ENCODE measurements at regions of chr1 and their contacts with region 1.

Region 1: GRCh38 chr1:201999625-202000238 is 10.7 kb upstream of the ELF3 start:
- DNase-seq: no peak
- H3K4me3 ChIP-seq: no peak overlapping the region
- H3K27ac ChIP-seq: no peak overlapping the region
- H3K4me1 ChIP-seq: no peaks in the 10 kb centered on the region
- H3K27me3 ChIP-seq: no peaks in the 10 kb centered on the region
- CTCF ChIP-seq: peak; percentile 49 to 93 (median 91)
- EP300 ChIP-seq: no peak
- POLR2A ChIP-seq: peak in 1 of 2 experiments; percentile 60; a peak in 2 of 3 replicates
- RAD21 ChIP-seq: peak; percentile 79 to 83

Region 2: DNA sequence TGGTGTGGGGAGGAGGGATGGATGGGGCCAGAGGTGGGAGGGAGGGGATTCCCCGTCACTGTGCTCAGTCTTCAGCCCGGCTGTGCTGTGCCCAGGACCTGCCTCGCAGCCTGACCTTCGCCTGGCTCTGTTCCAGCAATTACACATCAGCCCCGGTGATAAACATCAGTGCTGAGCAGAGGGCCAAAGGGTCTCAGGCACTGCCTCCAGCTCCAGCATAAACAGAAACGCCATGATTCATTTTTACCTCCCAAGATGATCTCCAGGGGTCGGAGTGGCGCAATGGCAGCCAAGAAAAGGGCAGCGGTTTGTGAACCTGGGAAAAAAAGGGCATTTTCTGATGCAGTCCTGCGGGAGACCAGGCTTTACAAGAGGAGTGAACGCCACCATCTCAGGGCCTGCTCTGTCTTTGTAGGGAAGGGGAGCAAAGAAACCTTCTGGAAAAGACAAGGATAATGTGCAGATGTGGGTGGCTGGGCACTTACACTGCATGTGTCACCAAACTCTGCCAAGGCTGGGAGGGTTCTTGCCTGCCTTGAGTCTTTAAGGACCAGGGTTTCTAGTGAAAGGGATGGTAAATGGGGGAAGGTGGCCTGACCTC is 83.0 kb before region 1 on chr1:
- CTCF ChIA-PET with region 1: interaction called, 10 read pairs
- POLR2A ChIA-PET with region 1: no interaction called
- DNase-seq: no peak
- H3K4me3 ChIP-seq: no peak overlapping the region
- H3K27ac ChIP-seq: no peak overlapping the region
- H3K4me1 ChIP-seq: peaks cover 0 to 3% (median 1%) of the 10 kb centered on the region in 4 experiments; a peak in 5 of 7 replicates
- H3K27me3 ChIP-seq: no peaks in the 10 kb centered on the region
- CTCF ChIP-seq: no peak
- EP300 ChIP-seq: no peak
- POLR2A ChIP-seq: no peak
- RAD21 ChIP-seq: no peak

Region 3: DNA sequence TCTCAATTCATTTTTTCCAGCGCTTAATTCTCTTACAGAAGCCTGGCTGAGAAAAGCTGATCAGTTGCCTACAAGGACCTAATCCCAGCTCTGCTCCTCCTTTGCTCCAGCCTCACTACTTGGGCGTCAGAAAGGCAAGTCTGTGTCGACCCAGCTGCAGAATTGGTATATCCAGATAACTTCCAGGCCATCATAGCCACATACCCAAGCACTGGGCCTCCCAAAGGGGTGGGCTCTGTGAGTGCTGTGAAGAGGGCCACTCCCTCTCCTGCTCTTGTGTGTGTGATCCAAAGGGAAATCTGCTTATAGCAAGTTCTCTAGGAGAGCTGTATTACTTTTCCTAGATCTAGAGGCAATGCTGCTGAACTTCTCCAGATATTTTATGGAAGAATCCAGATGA is 71.5 kb before region 1 on chr1:
- CTCF ChIA-PET with region 1: no interaction called
- POLR2A ChIA-PET with region 1: no interaction called
- DNase-seq: no peak
- H3K4me3 ChIP-seq: no peak overlapping the region
- H3K27ac ChIP-seq: no peak overlapping the region
- H3K4me1 ChIP-seq: no peaks in the 10 kb centered on the region
- H3K27me3 ChIP-seq: no peaks in the 10 kb centered on the region
- CTCF ChIP-seq: no peak
- EP300 ChIP-seq: no peak
- POLR2A ChIP-seq: no peak
- RAD21 ChIP-seq: no peak

Region 4: DNA sequence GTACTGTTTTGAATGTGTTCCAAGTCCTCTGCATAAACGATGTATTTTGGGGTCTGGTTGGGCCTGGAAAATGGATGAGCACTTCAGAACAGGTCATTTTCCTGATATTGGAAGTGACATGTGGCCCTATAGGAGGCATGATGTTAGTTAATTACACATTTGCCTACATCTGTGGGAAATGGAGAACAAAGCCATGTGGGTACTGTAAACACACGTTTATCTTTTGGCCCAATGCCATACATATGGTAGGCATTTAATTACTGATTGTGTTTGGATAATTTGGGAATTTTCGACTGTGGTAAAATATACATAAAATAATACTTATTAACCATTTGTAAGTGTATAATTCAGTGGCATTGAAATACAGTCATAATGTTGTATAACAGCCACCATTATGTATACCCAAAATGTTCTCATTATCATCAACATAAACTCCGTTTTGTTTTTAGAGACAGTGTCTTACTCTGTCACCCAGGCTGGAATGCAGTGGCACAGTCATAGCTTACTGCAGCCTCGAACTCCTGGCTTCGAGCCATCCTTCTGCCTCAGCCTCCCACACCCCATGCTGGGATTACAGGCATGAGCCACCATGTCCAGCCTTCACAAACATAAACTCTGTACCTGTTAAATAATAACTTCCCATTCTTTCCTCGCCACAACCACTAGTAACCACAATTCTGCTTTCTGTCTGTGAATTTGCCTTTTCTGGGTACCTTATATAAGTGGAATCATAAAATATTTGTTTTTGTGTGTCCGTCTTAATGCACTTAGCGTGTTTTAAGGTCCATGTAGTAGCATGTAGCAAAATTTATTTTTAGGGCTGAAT is 29.2 kb before region 1 on chr1:
- CTCF ChIA-PET with region 1: interaction called, 24 read pairs
- POLR2A ChIA-PET with region 1: no interaction called
- DNase-seq: no peak
- H3K4me3 ChIP-seq: no peak overlapping the region
- H3K27ac ChIP-seq: no peak overlapping the region
- H3K4me1 ChIP-seq: no peaks in the 10 kb centered on the region
- H3K27me3 ChIP-seq: no peaks in the 10 kb centered on the region
- CTCF ChIP-seq: no peak
- EP300 ChIP-seq: no peak
- POLR2A ChIP-seq: no peak
- RAD21 ChIP-seq: no peak

Region 5: DNA sequence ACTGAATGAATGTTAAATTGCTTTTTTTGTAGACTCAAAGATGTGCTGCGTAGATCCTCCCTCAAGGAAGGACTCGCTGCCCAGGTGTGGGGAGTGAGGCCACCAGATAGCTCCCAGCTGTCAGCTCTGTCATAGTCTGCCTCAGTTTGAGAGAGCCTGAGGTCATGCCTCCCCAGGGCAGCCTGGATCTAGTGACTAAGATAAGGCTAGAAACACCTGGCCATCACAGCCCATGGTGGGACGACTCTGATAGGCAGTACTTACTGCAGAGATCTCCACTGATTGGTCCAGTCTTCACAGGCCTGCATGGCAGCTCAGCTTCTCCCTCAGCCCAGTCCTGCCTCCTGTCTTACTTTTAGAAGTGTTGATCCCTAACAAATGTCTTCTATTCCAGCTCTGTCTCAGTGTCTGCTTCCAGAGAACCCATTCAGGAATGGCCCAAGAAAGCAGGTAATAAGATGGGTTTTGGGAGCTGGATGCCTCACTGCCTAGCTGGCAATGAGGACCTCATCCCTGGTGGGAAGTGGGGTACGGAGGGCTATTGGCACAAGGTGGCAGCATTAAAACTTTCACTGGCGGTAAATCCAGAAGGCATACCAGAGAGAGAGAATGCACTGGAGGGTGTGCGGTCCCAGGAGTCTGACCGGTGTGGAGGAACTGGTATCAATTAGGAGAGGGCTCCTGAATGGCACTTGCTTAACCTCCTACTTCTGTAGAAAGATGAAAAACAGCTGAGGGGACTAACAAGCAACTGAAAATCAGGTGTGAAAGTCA is 67.6 kb after region 1 on chr1:
- CTCF ChIA-PET with region 1: interaction called, 13 read pairs
- POLR2A ChIA-PET with region 1: interaction called, 3 read pairs
- DNase-seq: no peak
- H3K4me3 ChIP-seq: no peak overlapping the region
- H3K27ac ChIP-seq: no peak overlapping the region
- H3K4me1 ChIP-seq: peaks cover 0 to 4% (median 0%) of the 10 kb centered on the region in 4 experiments; a peak in 3 of 7 replicates
- H3K27me3 ChIP-seq: no peaks in the 10 kb centered on the region
- CTCF ChIP-seq: no peak
- EP300 ChIP-seq: no peak
- POLR2A ChIP-seq: no peak
- RAD21 ChIP-seq: no peak

Region 6: DNA sequence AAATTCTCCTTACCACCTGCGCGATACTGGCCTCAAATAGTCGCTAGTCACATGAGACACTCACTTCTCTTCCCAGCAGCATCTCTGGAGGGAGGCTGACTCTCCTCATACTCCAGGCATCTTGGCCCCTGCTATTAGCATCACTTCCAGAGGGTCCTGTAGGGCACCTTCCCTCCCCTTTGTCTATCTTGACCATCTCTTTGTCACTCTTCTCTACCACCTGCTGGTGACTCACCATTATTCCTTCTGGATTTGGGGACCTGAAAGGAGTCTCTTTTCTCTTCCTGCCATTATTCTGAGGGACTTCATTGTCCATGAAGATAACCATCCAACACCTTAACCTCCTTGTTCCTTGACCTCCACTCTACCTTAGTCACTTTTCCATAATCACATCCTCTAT is 91.3 kb after region 1 on chr1:
- CTCF ChIA-PET with region 1: interaction called, 12 read pairs
- POLR2A ChIA-PET with region 1: no interaction called
- DNase-seq: no peak
- H3K4me3 ChIP-seq: no peak overlapping the region
- H3K27ac ChIP-seq: no peak overlapping the region
- H3K4me1 ChIP-seq: peaks cover 5 to 10% (median 6%) of the 10 kb centered on the region in 4 experiments; a peak in 5 of 7 replicates
- H3K27me3 ChIP-seq: no peaks in the 10 kb centered on the region
- CTCF ChIP-seq: 0 out of 4 replicates have a peak, but pooled peaks of 1 of the 3 experiments have one; percentile 14
- EP300 ChIP-seq: no peak
- POLR2A ChIP-seq: no peak
- RAD21 ChIP-seq: peak; percentile 10 to 30; a peak in 2 of 4 replicates

Region 7: DNA sequence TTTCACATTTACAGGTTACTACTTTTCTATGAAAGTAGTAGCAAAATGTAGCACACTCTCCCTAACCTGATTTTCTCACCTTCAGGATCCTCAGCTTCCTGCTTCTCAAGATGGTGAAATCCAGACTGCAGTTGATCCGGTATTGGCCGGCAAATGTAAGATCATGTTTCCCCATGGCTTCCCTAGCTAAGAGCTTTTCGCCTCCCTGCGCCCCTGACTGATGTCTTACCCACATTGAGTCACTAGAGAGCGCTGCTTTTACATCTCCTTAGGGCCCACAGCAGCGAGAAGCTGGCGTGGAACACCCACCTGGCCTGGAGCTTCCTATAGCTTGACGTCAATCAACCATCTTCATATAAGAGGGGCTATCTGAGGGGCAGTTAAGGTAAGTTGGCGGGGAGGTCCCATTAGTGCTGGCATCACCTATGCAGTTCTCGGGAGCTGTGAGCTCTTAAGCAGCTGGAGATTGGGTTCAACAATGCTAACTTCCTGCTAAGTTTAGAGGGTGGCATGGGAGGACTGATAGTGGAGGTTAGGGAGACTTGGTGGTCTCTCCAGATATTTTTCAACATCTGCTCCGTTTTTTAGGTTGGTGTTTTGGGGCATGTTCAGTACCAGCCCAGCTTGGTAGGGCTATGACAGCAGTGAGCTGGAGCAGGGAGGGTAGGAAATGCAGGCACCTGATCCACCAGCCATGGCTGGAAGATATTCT is 155.2 kb after region 1 on chr1:
- CTCF ChIA-PET with region 1: interaction called, 10 read pairs
- POLR2A ChIA-PET with region 1: no interaction called
- DNase-seq: peak; percentile 39 to 77
- H3K4me3 ChIP-seq: no peak overlapping the region
- H3K27ac ChIP-seq: no peak overlapping the region
- H3K4me1 ChIP-seq: peaks cover 0 to 9% (median 5%) of the 10 kb centered on the region in 4 experiments; a peak in 3 of 7 replicates
- H3K27me3 ChIP-seq: no peaks in the 10 kb centered on the region
- CTCF ChIP-seq: peak; percentile 67 to 84 (median 69)
- EP300 ChIP-seq: no peak
- POLR2A ChIP-seq: no peak
- RAD21 ChIP-seq: peak; percentile 57 to 65